Heart left ventricle (tissue), 16 donors: ENCODE measurements at regions of chr2 and their contacts with region 1.

Region 1: DNA sequence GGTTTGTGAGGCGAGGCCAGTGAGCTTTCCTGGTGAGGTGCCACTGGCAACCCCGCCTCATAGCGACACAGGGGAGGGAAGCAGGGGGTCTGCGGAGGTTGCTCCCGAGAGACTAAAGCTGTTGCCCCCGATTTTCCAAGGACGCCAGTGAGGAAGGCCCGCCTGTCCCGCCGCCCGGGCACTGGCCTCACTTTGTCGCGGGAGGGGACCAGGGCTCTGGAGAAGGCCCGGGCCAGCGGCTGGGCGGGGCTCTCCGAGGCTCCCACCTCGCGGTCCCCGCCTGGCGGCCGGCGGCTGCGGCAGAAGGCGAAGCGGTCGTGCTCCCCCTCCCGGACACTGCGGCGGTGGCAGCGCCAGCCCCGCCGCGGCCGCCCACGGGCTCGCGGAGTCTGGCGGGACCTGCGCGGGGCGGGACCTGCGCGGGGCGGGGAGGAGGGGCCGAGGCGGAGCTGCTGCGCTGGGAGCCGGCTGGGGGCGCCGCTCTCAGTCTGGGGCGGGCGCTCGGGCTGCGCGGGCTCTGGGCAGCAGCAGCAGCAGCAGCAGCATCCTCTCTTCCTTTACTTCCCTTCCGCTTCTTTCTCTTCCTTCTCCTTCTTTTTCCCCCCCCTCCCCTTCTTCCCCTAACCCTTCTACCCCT is at the start of gene MAP2:
- DNase-seq: peak; percentile 84 to 91 (median 88)
- ATAC-seq: peak; percentile 93 to 100 (median 98)
- H3K4me3 ChIP-seq: peak within 1 kb of the TSS; percentile 30 to 77 (median 66)
- H3K27ac ChIP-seq: peak within 1 kb of the TSS in 7 of 12 donors; percentile 7 to 74 (median 44)
- H3K4me1 ChIP-seq: peaks cover 0 to 27% (median 13%) of the 10 kb centered on the region in 12 donors
- H3K27me3 ChIP-seq: peaks cover 0 to 4% (median 0%) of the 10 kb centered on the region in 9 donors
- CTCF ChIP-seq: peak; percentile 44 to 100 (median 93)
- POLR2A ChIP-seq: peak in 1 of 2 donors; percentile 78
- total RNA-seq, gene MAP2: 5.5 to 19.3 (median 8.9) TPM

Region 2: GRCh38 chr2:208407667-208408066 is 1016.0 kb before region 1 on chr2:
- intact Hi-C with region 1: loop called in 1 of 10 experiments (anchors 10 kb)
- DNase-seq: no peak
- ATAC-seq: no peak
- H3K4me3 ChIP-seq: no peak overlapping the region
- H3K27ac ChIP-seq: no peak overlapping the region
- H3K4me1 ChIP-seq: peaks cover 0 to 10% (median 6%) of the 10 kb centered on the region in 12 donors
- H3K27me3 ChIP-seq: peaks cover 11 to 73% (median 30%) of the 10 kb centered on the region in 9 donors
- CTCF ChIP-seq: peak in 6 of 12 donors; percentile 10 to 37 (median 25)
- POLR2A ChIP-seq: no peak

Region 3: GRCh38 chr2:209358992-209359391 is 64.7 kb before region 1 on chr2:
- intact Hi-C with region 1: no loop called
- DNase-seq: no peak
- ATAC-seq: peak; percentile 72 to 85 (median 81)
- H3K4me3 ChIP-seq: no peak overlapping the region
- H3K27ac ChIP-seq: no peak overlapping the region
- H3K4me1 ChIP-seq: peaks cover 0 to 3% (median 0%) of the 10 kb centered on the region in 12 donors
- H3K27me3 ChIP-seq: peaks cover 0 to 2% (median 0%) of the 10 kb centered on the region in 9 donors
- CTCF ChIP-seq: no peak
- POLR2A ChIP-seq: no peak

Region 4: DNA sequence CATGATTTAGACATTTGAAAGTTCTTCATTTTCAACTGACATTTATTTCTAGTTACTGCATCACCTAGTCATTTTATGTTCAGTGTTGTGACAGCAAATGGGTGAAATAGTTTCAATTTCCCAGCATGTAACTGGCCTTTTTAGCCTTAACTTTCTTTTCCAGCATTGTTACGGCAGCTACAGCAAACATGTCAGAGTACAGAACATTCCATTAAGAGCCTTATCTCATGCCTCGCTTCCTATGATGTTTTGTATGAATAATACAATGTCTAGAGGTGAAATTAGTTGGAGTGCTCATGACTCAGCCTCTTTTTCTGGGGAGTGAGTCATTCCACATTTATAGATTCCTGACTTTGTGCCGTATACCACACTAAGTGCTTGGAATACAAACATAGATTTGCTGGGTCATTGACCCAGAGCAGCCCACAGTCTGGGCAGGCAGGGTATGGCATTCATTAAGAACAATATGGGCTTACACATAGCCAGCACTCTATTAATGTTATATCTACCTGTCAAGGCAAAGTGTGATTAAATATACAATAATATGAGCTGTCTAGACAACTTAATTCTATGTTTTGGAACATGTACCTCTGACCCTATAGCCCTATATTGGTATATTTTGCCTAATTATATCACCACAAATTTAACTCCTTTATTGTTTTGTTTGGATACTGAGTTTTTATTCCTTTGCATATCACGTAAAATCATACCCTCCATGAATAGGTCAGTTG is 72.3 kb after region 1 on chr2:
- intact Hi-C with region 1: loop called in 2 of 10 experiments (anchors 5 to 10 kb)
- DNase-seq: peak in 4 of 5 donors; percentile 21 to 49 (median 39)
- ATAC-seq: peak; percentile 96 to 98 (median 98)
- H3K4me3 ChIP-seq: peak overlapping the region in 4 of 12 donors; percentile 6 to 24 (median 15)
- H3K27ac ChIP-seq: peak overlapping the region; percentile 58 to 93 (median 86)
- H3K4me1 ChIP-seq: peaks cover 0 to 28% (median 16%) of the 10 kb centered on the region in 12 donors
- H3K27me3 ChIP-seq: no peaks in the 10 kb centered on the region
- CTCF ChIP-seq: no peak
- POLR2A ChIP-seq: no peak

Region 5: DNA sequence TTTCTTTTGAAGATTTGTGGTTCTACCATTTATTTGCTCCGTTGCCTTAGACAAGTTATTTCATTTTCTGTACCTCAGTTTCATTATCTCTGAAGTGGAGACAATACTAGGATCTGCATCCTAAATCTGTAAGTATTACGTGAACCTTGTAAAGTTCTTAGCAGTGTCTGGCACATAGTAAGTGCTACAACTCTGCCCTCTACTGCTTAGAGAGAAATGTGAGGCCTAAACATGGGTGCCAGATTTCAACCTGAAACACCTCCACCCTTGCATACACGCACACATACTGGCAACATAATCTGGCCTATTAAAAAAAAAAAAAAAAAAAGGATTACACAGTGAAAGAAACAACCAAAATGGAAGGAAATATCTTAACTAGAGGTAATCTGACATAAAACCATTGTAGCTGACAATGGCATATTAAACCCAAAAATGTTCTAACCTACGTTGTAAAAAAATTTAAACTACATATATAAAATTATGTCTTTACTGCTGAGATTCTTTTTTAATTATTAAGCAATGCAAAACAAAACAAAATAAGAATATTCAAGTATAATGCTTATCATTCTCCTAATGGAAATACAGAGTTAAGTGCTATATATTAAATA is 132.8 kb after region 1 on chr2:
- intact Hi-C with region 1: loop called (anchors 1 to 5 kb)
- DNase-seq: no peak
- ATAC-seq: peak in 3 of 4 donors; percentile 70 to 87 (median 83)
- H3K4me3 ChIP-seq: no peak overlapping the region
- H3K27ac ChIP-seq: no peak overlapping the region
- H3K4me1 ChIP-seq: no peaks in the 10 kb centered on the region
- H3K27me3 ChIP-seq: no peaks in the 10 kb centered on the region
- CTCF ChIP-seq: peak; percentile 30 to 76 (median 58)
- POLR2A ChIP-seq: no peak

Region 6: GRCh38 chr2:209960676-209961630 is 537.3 kb after region 1 on chr2:
- intact Hi-C with region 1: loop called in 1 of 10 experiments (anchors 5 kb)
- DNase-seq: peak in 4 of 5 donors; percentile 12 to 31 (median 28)
- ATAC-seq: peak in 3 of 4 donors; percentile 42 to 69 (median 60)
- H3K4me3 ChIP-seq: no peak overlapping the region
- H3K27ac ChIP-seq: no peak overlapping the region
- H3K4me1 ChIP-seq: no peaks in the 10 kb centered on the region
- H3K27me3 ChIP-seq: no peaks in the 10 kb centered on the region
- CTCF ChIP-seq: peak; percentile 42 to 78 (median 56)
- POLR2A ChIP-seq: no peak

Region 7: GRCh38 chr2:210195101-210195852 is 771.6 kb after region 1 on chr2:
- intact Hi-C with region 1: loop called in 1 of 10 experiments (anchors 10 kb)
- DNase-seq: no peak
- ATAC-seq: peak in 1 of 4 donors; percentile 52
- H3K4me3 ChIP-seq: peak overlapping the region in 10 of 12 donors; percentile 6 to 49 (median 36)
- H3K27ac ChIP-seq: no peak overlapping the region
- H3K4me1 ChIP-seq: peaks cover 0 to 4% (median 0%) of the 10 kb centered on the region in 12 donors
- H3K27me3 ChIP-seq: no peaks in the 10 kb centered on the region
- CTCF ChIP-seq: peak; percentile 59 to 86 (median 72)
- POLR2A ChIP-seq: no peak